Activated T-helper 1 cell treated with anti-CD3 and anti-CD28 coated beads, Interleukin-12 subunit alpha, Interleukin-12 subunit beta, Interleukin-2, Interleukin-4 antibody, amounts not matched to agents 30 ng/mL and 10 ng/mL and 1 ng/mL, durations not matched to agents 14 hours and 24 hours and 36 hours (primary cell): ENCODE measurements at regions of chr13 and their contacts with region 1.

Region 1: DNA sequence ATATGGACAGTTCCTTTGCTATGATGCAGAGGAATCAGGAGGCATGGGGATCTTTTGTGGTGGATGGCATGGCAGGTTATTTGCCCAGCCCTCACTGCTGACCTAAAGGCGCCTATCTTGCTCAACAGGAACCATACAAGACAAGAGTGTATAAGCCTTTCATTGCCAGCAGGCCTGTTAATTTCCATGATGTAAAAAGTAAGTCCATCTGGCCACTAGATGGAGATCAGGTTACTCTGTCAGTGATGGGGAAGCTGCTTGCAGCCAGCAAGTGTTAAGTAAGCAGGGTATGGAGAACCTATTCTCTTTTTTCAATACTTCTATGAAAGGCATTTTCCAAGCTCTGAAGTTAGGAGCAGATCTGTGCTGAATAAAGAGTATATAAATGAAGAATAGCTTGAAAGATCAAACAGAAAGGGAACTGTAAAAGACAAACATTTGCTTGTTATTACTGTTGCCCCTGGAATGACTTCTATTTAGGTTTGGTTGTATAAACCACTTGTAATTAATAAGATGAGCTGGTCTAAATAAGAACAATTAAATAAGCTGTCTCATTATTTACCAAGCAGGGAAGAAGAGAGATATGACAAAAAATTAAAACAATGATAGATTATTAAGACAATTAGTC is 210.9 kb downstream of the RGCC start:
- DNase-seq: peak; percentile 28
- H3K4me3 Mint-ChIP-seq: no peak overlapping the region
- H3K27ac Mint-ChIP-seq: no peak overlapping the region
- H3K4me1 Mint-ChIP-seq: no peaks in the 10 kb centered on the region
- H3K27me3 Mint-ChIP-seq: no peaks in the 10 kb centered on the region

Region 2: GRCh38 chr13:41085961-41086585 is 582.2 kb before region 1 on chr13:
- intact Hi-C with region 1: no loop called
- DNase-seq: no peak
- H3K4me3 Mint-ChIP-seq: no peak overlapping the region
- H3K27ac Mint-ChIP-seq: no peak overlapping the region
- H3K4me1 Mint-ChIP-seq: no peaks in the 10 kb centered on the region
- H3K27me3 Mint-ChIP-seq: no peaks in the 10 kb centered on the region

Region 3: DNA sequence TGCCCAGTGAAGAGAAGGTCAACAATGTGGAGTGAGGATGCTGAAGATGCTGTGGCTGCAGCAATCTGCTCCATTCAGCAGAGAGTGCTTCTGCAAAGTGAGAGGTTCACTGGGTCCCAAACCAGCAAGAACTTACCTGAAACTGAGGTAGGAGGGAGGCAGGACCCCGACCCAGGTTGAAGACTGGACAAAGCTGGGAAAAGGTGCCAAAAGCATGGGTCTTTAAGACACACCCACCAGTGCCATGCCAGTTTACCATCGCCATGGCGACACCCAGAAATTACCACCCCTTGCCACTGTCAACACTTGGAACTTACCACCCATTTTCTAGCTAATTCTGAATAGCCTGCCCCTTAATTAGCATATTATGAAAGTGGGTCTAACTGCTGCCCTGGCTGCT is 140.2 kb before region 1 on chr13:
- intact Hi-C with region 1: no loop called
- DNase-seq: no peak
- H3K4me3 Mint-ChIP-seq: no peak overlapping the region
- H3K27ac Mint-ChIP-seq: no peak overlapping the region
- H3K4me1 Mint-ChIP-seq: no peaks in the 10 kb centered on the region
- H3K27me3 Mint-ChIP-seq: peaks cover 6% of the 10 kb centered on the region

Region 4: DNA sequence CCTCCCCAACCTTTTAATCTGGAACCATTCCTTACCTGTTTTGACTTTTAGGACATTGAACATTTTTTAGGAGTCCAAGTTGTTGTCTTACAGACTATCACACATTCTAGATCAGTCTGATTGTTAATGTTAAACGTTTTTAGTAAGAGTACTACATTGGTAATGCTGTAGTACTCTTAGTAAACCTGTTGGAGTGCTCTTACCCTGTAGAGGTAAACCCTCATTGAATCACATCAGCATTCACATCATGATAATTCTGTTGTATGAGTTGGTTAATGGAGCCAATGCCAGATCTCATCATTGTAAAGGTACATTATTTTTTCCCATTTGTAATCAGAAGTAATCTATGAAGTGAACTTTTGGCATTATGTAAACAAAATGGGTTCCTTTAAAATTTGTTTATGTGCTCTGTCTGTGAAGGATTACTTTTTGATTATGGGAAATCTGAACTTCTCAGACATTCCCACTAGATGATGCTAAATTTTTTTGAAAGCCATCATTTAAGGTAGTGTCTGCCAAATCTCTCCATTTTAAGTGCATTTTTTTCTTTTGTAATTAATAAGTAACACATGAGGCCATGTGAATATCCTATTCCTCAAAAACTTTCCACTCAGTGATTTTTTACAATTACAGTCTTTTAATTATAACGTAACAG is 237.5 kb after region 1 on chr13:
- intact Hi-C with region 1: loop called (anchors 5 kb)
- DNase-seq: no peak
- H3K4me3 Mint-ChIP-seq: no peak overlapping the region
- H3K27ac Mint-ChIP-seq: no peak overlapping the region
- H3K4me1 Mint-ChIP-seq: peaks cover 14% of the 10 kb centered on the region
- H3K27me3 Mint-ChIP-seq: no peaks in the 10 kb centered on the region

Region 5: DNA sequence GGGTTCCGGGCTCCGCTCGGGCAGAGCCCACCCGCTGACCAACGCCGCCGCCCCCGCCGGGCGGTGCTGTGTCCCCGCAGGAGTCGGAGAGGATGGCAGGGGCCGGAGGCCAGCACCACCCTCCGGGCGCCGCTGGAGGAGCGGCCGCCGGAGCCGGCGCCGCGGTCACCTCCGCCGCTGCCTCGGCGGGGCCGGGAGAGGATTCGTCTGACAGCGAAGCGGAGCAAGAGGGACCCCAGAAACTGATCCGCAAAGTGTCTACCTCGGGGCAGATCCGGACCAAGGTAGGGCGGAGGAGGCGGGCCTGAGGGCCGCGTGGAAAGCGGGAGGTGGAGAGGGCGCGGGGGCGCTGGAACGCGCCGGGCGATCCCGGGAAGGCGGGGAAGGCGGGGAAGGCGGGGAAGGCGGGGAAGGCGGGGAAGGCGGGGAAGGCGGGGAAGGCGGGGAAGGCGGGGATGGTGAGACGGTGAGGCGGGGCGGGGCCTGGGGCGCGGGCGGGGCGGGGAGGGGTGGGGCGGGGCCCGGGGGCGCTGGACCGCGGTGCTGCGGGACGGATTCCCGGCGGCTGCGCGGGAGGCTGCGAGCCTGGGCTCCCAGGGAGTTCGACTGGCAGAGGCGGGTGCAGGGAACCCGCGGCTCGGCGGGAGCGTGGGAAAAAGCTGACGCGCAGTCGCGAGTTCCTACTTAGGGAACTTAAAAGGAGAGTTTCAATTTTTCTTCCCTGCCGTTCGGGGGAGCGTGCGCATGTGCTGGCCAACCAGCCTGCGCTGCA is 380.6 kb after region 1 on chr13:
- intact Hi-C with region 1: loop called (anchors 5 kb)
- DNase-seq: peak; percentile 59
- H3K4me3 Mint-ChIP-seq: peak overlapping the region; percentile 88
- H3K27ac Mint-ChIP-seq: peak overlapping the region; percentile 80
- H3K4me1 Mint-ChIP-seq: peaks cover 25% of the 10 kb centered on the region
- H3K27me3 Mint-ChIP-seq: peaks cover 16% of the 10 kb centered on the region

Region 6: DNA sequence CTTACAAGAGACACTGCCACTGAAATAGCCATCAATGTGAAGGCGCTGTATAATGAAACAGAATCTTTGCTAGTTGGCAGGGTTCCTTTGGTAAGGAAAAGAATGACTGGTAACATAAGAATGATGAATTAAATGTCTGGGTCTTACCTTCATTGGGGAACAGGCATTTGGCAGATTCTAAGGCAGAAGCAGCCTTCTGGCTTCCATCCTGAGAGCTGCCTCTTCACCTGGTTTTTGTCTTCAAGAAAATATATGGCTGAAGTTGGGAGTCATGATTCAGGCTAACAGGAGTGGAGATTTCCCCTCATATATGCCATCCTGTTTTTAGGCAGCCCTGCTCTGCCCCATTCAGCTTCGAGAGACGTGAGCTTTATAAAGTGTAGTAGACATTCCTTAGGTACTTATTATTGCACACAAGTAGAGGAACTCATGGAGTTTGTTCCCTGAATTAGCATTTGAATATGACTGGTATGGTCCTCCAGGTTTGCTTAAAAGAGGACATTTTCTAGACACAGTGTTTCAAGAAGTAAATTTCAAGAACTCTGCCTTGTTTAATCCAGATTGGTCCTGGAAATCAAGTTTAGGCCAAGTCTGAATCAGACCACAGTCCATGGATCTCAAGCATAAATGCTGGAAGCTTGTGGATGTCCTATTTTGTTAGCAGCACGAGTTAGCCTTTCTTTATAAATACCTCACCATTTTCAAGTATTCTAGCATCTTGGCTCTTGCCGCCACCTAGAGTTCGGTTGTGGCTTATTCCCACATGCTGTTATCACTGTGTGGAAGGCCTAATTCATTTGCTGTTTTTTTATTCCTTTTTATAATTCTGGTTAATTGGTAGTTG is 547.6 kb after region 1 on chr13:
- intact Hi-C with region 1: loop called (anchors 5 kb)
- DNase-seq: peak; percentile 3
- H3K4me3 Mint-ChIP-seq: no peak overlapping the region
- H3K27ac Mint-ChIP-seq: no peak overlapping the region
- H3K4me1 Mint-ChIP-seq: no peaks in the 10 kb centered on the region
- H3K27me3 Mint-ChIP-seq: no peaks in the 10 kb centered on the region